GM18951 (cell line): ENCODE measurements at regions of chr4 and their contacts with region 1.

Region 1: GRCh38 chr4:152735396-152735859 is 44.1 kb downstream of the TIGD4 start:
- POLR2A ChIP-seq: no peak

Region 2: GRCh38 chr4:152448038-152448707 is 287.3 kb before region 1 on chr4:
- in situ Hi-C with region 1: loop called (anchors 10 kb)
- POLR2A ChIP-seq: no peak

Region 3: DNA sequence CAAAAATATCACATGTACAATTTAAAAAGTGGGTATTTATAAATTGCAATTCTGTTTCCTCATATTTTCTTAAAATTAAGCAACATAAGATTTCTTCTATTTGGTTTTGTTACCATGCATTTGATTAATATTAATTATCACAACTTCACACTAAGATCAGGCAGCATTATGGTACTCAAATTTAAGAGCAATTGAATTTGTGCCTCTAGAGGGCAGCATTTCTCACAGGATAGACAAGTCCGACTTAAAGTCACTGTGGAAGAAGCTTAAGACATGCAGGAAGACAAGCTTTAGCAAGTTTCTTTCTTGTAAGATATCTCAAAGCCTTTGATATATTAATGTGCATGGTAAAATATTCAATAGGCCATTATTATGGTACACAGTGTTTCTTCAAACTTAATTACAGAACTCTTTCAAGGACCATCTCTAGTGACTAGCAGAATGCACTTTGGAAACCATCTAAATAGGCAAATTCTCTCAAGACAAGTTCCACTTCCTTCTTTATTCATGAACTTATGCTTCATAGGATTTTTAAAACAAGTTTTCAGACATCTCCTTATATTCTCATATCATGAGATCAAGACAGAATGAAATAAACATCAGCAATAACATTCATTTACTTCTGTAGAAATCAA is 234.5 kb before region 1 on chr4:
- in situ Hi-C with region 1: loop called (anchors 10 kb)
- POLR2A ChIP-seq: no peak

Region 4: GRCh38 chr4:152640058-152640833 is 95.2 kb before region 1 on chr4:
- in situ Hi-C with region 1: loop called (anchors 5 kb)
- POLR2A ChIP-seq: no peak